ENCODE measurements at regions of chr7 and their contacts with region 1.

Region 1: GRCh38 chr7:44999245-45000095 is 531 bp upstream of the CCM2 start:
- DNase-seq: peak; percentile 99 to 100
- H3K4me3 ChIP-seq: peak overlapping the region; percentile 88 to 94
- H3K27ac ChIP-seq: peak overlapping the region; percentile 85 to 89
- H3K4me1 ChIP-seq: peaks cover 0 to 17% (median 15%) of the 10 kb centered on the region in 4 donors
- H3K27me3 ChIP-seq: no peaks in the 10 kb centered on the region
- CTCF ChIP-seq: no peak

Region 2: GRCh38 chr7:44735403-44736165 is 263.9 kb before region 1 on chr7:
- intact Hi-C with region 1: no loop called
- DNase-seq: no peak
- H3K4me3 ChIP-seq: no peak overlapping the region
- H3K27ac ChIP-seq: no peak overlapping the region
- H3K4me1 ChIP-seq: no peaks in the 10 kb centered on the region
- H3K27me3 ChIP-seq: no peaks in the 10 kb centered on the region
- CTCF ChIP-seq: no peak

Region 3: GRCh38 chr7:44885394-44886317 is 113.8 kb before region 1 on chr7 and contains the start of gene PURB:
- intact Hi-C with region 1: loop called (anchors 10 kb)
- DNase-seq: peak; percentile 93 to 96
- H3K4me3 ChIP-seq: peak within 1 kb of the TSS; percentile 79 to 98
- H3K27ac ChIP-seq: peak within 1 kb of the TSS; percentile 97
- H3K4me1 ChIP-seq: peaks cover 0 to 48% (median 39%) of the 10 kb centered on the region in 4 donors
- H3K27me3 ChIP-seq: no peaks in the 10 kb centered on the region
- CTCF ChIP-seq: no peak

Region 4: GRCh38 chr7:45089341-45089891 is 89.9 kb after region 1 on chr7:
- intact Hi-C with region 1: loop called (anchors 5 kb)
- DNase-seq: peak in 1 of 2 donors; percentile 79
- H3K4me3 ChIP-seq: peak overlapping the region; percentile 64 to 74
- H3K27ac ChIP-seq: peak overlapping the region; percentile 84 to 88
- H3K4me1 ChIP-seq: peaks cover 0 to 18% (median 9%) of the 10 kb centered on the region in 4 donors
- H3K27me3 ChIP-seq: no peaks in the 10 kb centered on the region
- CTCF ChIP-seq: no peak

Measured in tibial artery (tissue), 4 donors.